GM12878 (cell line): ENCODE measurements at regions of chr18 and their contacts with region 1.

Region 1: DNA sequence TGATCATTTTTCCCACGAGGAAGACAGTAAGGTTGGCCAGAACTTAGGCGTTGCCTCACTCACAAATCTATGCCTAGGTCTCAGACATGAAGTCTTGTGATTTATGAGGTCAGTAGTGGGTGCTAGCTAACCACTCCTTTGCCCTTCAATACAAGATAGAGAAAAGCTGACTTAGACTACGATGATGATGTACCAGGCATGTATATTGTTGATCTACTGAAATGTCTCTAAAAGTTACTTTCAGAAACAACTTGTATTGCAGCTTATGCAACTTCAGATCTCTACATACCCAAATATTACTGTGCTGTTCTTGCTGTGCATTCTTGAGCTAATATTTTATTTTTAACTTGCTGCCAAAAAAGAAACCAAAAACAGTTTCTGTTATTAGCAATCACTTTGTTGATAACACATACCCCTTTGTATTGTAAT is 30.6 kb downstream of the MAPRE2 start:
- DNase-seq: no peak
- ATAC-seq: peak; percentile 84
- H3K4me3 ChIP-seq: no peak overlapping the region
- H3K27ac ChIP-seq: peak overlapping the region; percentile 52; the same call in 1 of the 2 replicates
- H3K4me1 ChIP-seq: peaks cover 15% of the 10 kb centered on the region
- H3K27me3 ChIP-seq: no peaks in the 10 kb centered on the region
- CTCF ChIP-seq: no peak
- EP300 ChIP-seq: no peak
- POLR2A ChIP-seq: no peak
- RAD21 ChIP-seq: no peak

Region 2: DNA sequence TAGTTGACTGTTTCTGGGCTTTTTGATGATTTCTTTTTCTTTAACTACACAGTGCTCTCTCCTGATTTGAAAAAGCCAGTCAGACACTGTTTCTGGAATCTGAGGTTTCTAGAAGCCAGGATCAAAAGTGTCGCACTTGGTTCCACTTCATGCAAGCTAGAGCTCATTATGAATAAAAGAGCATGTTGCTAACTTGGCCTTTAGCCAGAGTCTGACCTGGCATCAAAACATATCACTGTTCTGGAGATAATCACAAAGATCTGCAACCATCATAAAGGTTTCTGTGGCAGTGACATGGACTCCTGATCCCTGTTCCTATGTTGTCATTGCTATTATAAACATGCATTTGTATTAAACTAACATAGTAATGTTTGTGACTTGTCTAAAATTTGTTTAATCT is 106.7 kb before region 1 on chr18:
- CTCF ChIA-PET with region 1: no interaction called
- POLR2A ChIA-PET with region 1: no interaction called
- RAD21 ChIA-PET with region 1: no interaction called
- SMC1A ChIA-PET with region 1: no interaction called
- in situ Hi-C with region 1: no loop called
- intact Hi-C with region 1: no loop called
- DNase-seq: no peak
- ATAC-seq: no peak
- H3K4me3 ChIP-seq: no peak overlapping the region
- H3K27ac ChIP-seq: no peak overlapping the region
- H3K4me1 ChIP-seq: no peaks in the 10 kb centered on the region
- H3K27me3 ChIP-seq: no peaks in the 10 kb centered on the region; a peak in 1 of 4 replicates
- CTCF ChIP-seq: no peak
- EP300 ChIP-seq: no peak
- POLR2A ChIP-seq: no peak
- RAD21 ChIP-seq: no peak

Region 3: DNA sequence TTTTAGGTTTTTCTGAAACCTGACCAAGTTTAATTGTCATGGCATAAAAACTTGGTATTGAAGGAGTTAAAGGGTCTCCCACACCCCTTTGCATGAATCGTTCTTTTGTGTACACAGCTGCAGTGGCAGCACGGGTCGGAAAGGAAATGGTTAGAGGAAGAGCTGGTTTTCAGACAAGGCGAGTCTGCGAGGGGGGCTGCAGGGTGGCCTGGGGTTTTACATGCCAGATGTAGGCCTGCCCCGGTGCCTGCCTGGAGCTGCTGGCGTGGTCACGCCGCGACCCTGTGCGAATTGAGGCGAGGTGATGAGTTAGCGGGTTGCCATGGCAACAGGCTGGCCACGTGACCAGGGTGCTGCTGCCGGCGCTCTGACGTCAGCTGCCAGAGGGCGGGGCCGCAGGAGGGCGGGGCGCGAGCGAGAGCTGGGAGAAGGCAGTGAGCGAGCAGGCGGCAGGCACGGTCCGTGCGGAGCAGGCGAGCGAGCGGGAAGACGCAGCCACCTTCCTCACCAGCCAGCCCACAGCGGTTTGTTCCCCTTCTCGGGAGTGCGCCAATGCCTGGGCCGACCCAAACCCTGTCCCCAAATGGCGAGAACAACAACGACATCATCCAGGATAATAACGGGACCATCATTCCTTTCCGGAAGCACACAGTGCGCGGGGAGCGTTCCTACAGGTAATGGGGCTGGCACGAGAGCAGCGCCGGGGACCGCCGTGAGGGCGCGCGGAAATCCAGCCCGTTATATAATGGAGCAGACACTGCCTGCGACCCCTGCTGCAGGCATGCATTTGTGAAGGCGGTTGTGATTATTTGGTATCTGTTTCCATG is 30.6 kb before region 1 on chr18 and contains the start of gene MAPRE2:
- CTCF ChIA-PET with region 1: interaction called, 3 read pairs
- POLR2A ChIA-PET with region 1: interaction called, 3 read pairs
- RAD21 ChIA-PET with region 1: interaction called, 15 read pairs
- SMC1A ChIA-PET with region 1: interaction called, 15 read pairs
- in situ Hi-C with region 1: no loop called
- intact Hi-C with region 1: no loop called
- DNase-seq: peak; percentile 82
- ATAC-seq: peak; percentile 84
- H3K4me3 ChIP-seq: peak within 1 kb of the TSS; percentile 78
- H3K27ac ChIP-seq: peak within 1 kb of the TSS; percentile 66
- H3K4me1 ChIP-seq: peaks cover 12% of the 10 kb centered on the region; the same call in 1 of the 2 replicates
- H3K27me3 ChIP-seq: no peaks in the 10 kb centered on the region
- CTCF ChIP-seq: no peak
- EP300 ChIP-seq: peak in 1 of 2 experiments; percentile 43; a peak in 2 of 4 replicates
- POLR2A ChIP-seq: peak; percentile 99
- RAD21 ChIP-seq: no peak
- polyA plus RNA-seq, gene MAPRE2: 11.0 to 16.3 TPM

Region 4: DNA sequence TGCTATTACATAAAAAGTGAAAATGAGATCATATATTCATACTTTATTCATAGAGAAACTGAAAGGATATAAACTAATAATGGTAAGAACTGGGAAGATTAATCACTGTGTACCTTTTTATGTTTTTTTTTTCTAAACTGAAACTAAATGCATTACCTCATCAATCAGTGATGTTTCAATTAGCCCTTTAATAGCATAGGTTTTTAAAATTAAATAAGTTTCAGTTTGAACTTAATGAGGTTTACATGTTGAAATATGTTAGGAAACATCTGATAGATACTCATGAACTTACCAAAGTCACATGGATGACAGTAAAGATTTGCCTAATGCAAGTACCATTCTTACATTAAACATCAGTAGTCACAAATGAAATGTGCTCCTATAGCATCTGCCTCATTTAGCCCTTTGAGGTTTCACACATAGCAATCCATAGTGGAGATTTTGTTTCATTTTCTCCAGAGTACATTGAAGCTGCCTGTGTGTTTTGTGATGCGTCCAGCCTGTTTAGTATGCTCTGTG is 21.7 kb before region 1 on chr18:
- CTCF ChIA-PET with region 1: interaction called, 7 read pairs
- POLR2A ChIA-PET with region 1: interaction called, 4 read pairs
- RAD21 ChIA-PET with region 1: interaction called, 15 read pairs
- SMC1A ChIA-PET with region 1: interaction called, 15 read pairs
- in situ Hi-C with region 1: no loop called
- intact Hi-C with region 1: no loop called
- DNase-seq: no peak
- ATAC-seq: peak; percentile 66
- H3K4me3 ChIP-seq: peak overlapping the region; percentile 43
- H3K27ac ChIP-seq: peak overlapping the region; percentile 94
- H3K4me1 ChIP-seq: peaks cover 20% of the 10 kb centered on the region
- H3K27me3 ChIP-seq: no peaks in the 10 kb centered on the region
- CTCF ChIP-seq: no peak
- EP300 ChIP-seq: no peak
- POLR2A ChIP-seq: no peak
- RAD21 ChIP-seq: no peak

Region 5: DNA sequence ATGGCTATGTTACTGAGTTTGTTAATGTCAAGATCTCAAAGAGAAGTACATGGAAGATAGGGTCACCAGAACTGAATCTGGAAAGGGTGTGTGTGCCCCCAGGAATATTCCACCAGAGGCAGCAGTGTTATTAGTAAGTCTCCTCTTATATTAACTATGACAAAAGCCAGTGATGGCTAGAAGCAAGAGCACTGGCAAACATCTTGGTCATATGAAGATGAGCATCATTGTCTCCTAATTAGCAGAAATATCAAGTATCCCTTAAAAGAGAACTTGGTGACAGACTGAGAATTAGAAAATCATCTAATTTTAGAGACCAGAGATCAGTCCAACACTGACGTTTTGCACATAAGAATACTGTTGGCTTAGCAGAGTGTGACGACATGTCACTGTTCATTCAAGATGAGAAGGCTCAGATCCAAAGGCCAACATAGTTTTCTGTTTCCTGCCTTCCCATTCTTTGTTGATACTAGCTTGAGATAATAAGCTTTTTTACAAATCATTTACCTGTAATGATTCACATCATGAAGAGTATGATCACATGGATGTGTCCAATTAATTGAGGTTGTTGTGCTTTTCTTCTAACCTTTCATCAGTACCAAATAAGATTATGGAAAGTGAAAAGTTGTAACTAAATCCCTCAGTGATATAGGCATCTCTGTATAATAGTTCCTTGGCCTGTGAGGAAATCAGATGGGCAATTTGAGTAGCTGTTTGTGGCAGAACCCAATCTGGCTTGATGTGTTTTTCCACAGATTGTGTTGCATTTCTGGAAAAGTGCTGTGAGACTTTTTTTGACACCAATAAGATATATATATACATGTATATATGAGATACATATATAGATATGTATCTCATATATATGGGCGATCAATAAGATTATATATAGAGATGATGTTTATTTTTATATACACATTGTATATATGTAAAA is 13.9 kb after region 1 on chr18:
- CTCF ChIA-PET with region 1: interaction called, 21 read pairs
- POLR2A ChIA-PET with region 1: no interaction called
- RAD21 ChIA-PET with region 1: no interaction called
- SMC1A ChIA-PET with region 1: interaction called, 6 read pairs
- in situ Hi-C with region 1: no loop called
- intact Hi-C with region 1: no loop called
- DNase-seq: no peak
- ATAC-seq: no peak
- H3K4me3 ChIP-seq: no peak overlapping the region
- H3K27ac ChIP-seq: no peak overlapping the region
- H3K4me1 ChIP-seq: no peaks in the 10 kb centered on the region
- H3K27me3 ChIP-seq: no peaks in the 10 kb centered on the region
- CTCF ChIP-seq: no peak
- EP300 ChIP-seq: no peak
- POLR2A ChIP-seq: no peak
- RAD21 ChIP-seq: no peak

Region 6: GRCh38 chr18:35143622-35144596 is 72.1 kb after region 1 on chr18:
- CTCF ChIA-PET with region 1: interaction called, 23 read pairs
- POLR2A ChIA-PET with region 1: no interaction called
- RAD21 ChIA-PET with region 1: interaction called, 11 read pairs
- SMC1A ChIA-PET with region 1: interaction called, 3 read pairs
- in situ Hi-C with region 1: no loop called
- intact Hi-C with region 1: no loop called
- DNase-seq: no peak
- ATAC-seq: peak; percentile 97
- H3K4me3 ChIP-seq: no peak overlapping the region
- H3K27ac ChIP-seq: no peak overlapping the region
- H3K4me1 ChIP-seq: peaks cover 4% of the 10 kb centered on the region
- H3K27me3 ChIP-seq: no peaks in the 10 kb centered on the region
- CTCF ChIP-seq: peak; percentile 49 to 77 (median 74)
- EP300 ChIP-seq: no peak
- POLR2A ChIP-seq: no peak
- RAD21 ChIP-seq: peak; percentile 69

Region 7: DNA sequence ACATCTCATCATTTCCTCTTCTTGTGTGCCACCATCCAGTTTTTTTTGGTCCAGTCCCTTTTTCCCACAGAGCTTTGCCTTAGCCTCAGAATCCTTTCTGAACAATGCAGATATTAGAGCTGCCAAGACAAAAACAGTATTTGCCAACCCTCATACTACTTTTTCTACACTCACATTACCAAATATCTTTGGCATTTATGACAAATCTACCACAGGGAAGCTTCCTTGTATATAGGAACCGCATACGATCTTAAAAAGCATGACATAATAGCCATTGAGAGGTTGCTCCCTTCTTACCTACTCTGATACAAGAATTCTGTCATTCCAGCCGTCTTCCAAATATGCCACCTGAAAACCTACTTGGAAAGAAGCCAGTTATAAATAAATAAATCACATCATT is 263.0 kb after region 1 on chr18:
- CTCF ChIA-PET with region 1: no interaction called
- POLR2A ChIA-PET with region 1: no interaction called
- RAD21 ChIA-PET with region 1: no interaction called
- SMC1A ChIA-PET with region 1: no interaction called
- in situ Hi-C with region 1: no loop called
- intact Hi-C with region 1: no loop called
- DNase-seq: no peak
- ATAC-seq: no peak
- H3K4me3 ChIP-seq: no peak overlapping the region
- H3K27ac ChIP-seq: no peak overlapping the region
- H3K4me1 ChIP-seq: no peaks in the 10 kb centered on the region
- H3K27me3 ChIP-seq: no peaks in the 10 kb centered on the region
- CTCF ChIP-seq: no peak
- EP300 ChIP-seq: no peak
- POLR2A ChIP-seq: no peak
- RAD21 ChIP-seq: no peak